IMR-90 (cell line): ENCODE measurements at regions of chr1 and their contacts with region 1.

Region 1: DNA sequence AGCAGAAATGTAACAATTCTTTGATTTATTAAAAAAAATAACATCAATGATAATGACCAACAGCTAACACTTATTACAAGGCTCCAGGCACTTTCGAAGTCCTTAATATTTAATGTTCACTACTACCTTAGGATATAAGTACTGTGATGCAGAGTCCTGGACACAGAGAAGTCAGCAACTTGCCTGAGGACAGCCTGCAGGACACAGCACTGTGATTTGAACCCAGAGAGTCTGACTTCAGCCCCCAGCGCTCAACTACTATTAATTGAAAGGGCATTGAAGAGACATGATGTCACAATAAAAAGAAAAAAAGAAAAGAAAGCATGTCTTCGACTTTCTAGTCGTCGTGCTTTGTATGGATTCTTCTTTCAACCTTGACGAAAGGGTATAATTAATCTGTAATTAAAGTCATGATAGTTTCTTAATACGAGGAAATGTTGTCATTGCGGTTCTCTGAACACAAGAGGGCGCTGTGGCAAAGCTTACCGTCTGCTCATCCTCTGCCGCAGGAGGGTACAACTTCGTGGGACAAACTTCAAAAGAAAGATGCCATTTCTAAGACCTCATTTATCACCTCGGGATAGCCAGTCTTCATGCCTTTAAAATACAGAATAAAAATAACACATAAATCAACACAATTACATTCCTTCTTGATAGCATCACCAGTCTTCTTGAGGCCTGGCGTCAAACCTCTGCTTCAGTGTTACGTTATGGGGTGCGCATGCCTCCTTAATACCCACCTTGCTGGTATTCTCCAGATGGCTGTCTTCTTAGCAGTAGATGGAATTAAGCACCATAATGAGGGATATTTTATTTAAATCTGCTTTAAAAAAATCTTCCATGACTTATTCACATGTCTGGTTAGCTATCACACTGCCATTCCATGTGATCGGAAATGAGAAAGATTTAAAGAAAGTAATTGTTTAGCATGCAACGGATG is 240.1 kb downstream of the DISC1 start:
- DNase-seq: peak; percentile 58
- ATAC-seq: peak; percentile 48; the same call in 1 of the 2 replicates
- H3K4me3 ChIP-seq: no peak overlapping the region
- H3K27ac ChIP-seq: no peak overlapping the region
- H3K4me1 ChIP-seq: peaks cover 6% of the 10 kb centered on the region; the same call in 1 of the 2 replicates
- H3K27me3 ChIP-seq: no peaks in the 10 kb centered on the region
- CTCF ChIP-seq: peak; percentile 84
- POLR2A ChIP-seq: 0 out of 2 replicates have a peak, but pooled peaks have one; percentile 31
- RAD21 ChIP-seq: peak; percentile 94

Region 2: GRCh38 chr1:231757101-231757404 is 109.6 kb before region 1 on chr1:
- CTCF ChIA-PET with region 1: interaction called, 3 read pairs
- POLR2A ChIA-PET with region 1: no interaction called
- dilution Hi-C with region 1: no loop called
- in situ Hi-C with region 1: no loop called
- intact Hi-C with region 1: loop called (anchors 5 kb)
- DNase-seq: no peak
- ATAC-seq: peak; percentile 53
- H3K4me3 ChIP-seq: no peak overlapping the region
- H3K27ac ChIP-seq: no peak overlapping the region
- H3K4me1 ChIP-seq: no peaks in the 10 kb centered on the region
- H3K27me3 ChIP-seq: no peaks in the 10 kb centered on the region
- CTCF ChIP-seq: no peak
- POLR2A ChIP-seq: no peak
- RAD21 ChIP-seq: no peak

Region 3: DNA sequence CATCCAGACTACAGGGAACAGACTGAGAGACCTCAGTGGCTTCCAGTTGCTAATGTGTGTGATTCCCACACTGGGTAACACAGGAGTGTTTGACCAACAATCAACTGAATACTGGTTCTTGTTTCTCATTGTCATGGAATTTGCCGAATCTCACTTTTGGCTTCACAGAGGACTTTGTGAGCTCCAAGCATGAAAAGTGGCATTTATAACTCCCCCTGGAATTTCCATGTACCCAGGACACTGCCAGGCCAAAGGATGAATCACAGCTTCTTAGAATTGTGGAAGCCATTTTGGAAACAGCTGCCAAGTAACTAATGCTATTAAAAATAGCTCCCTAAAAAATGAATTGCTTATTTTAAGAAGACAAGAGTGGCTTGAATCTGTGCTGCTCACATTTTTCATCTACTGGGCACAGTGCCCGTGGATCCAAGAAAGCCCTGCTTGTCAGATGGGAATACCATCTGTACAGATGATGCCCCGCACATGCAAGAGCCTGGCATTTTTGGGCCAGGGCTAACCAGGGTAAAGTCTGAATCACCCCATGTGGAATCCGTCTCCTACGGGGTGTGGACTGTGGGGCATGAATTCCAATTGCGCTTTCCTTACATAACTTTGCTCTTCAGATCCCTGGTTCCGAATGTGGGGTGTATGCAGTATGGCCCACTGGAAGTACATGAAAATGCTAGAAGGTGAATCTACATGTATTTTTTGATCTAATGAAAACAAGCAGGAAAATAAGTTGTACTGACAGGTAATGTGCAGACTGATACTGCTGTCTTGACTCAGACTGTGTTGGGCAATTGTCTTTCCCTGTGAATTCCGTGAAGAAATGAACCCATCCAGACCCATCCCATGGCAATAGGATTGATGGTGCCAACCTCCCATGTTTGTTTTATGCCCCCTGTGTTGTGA is 276.0 kb after region 1 on chr1:
- CTCF ChIA-PET with region 1: no interaction called
- POLR2A ChIA-PET with region 1: no interaction called
- dilution Hi-C with region 1: no loop called
- in situ Hi-C with region 1: no loop called
- intact Hi-C with region 1: loop called (anchors 10 kb)
- DNase-seq: peak; percentile 82
- ATAC-seq: peak; percentile 90
- H3K4me3 ChIP-seq: no peak overlapping the region
- H3K27ac ChIP-seq: no peak overlapping the region
- H3K4me1 ChIP-seq: peaks cover 8% of the 10 kb centered on the region
- H3K27me3 ChIP-seq: no peaks in the 10 kb centered on the region
- CTCF ChIP-seq: no peak
- POLR2A ChIP-seq: no peak
- RAD21 ChIP-seq: no peak

Region 4: GRCh38 chr1:232260844-232261243 is 394.2 kb after region 1 on chr1:
- CTCF ChIA-PET with region 1: no interaction called
- POLR2A ChIA-PET with region 1: no interaction called
- dilution Hi-C with region 1: no loop called
- in situ Hi-C with region 1: no loop called
- intact Hi-C with region 1: no loop called
- DNase-seq: no peak
- ATAC-seq: no peak
- H3K4me3 ChIP-seq: no peak overlapping the region
- H3K27ac ChIP-seq: no peak overlapping the region
- H3K4me1 ChIP-seq: no peaks in the 10 kb centered on the region
- H3K27me3 ChIP-seq: peaks cover 7% of the 10 kb centered on the region
- CTCF ChIP-seq: no peak
- POLR2A ChIP-seq: no peak
- RAD21 ChIP-seq: no peak

Region 5: GRCh38 chr1:232428786-232429530 is 562.3 kb after region 1 on chr1:
- CTCF ChIA-PET with region 1: no interaction called
- POLR2A ChIA-PET with region 1: no interaction called
- dilution Hi-C with region 1: no loop called
- in situ Hi-C with region 1: no loop called
- intact Hi-C with region 1: loop called (anchors 5 kb)
- DNase-seq: peak; percentile 89
- ATAC-seq: peak; percentile 96
- H3K4me3 ChIP-seq: no peak overlapping the region
- H3K27ac ChIP-seq: 0 out of 2 replicates have a peak overlapping the region, but pooled peaks have one; percentile 8
- H3K4me1 ChIP-seq: peaks cover 11% of the 10 kb centered on the region
- H3K27me3 ChIP-seq: no peaks in the 10 kb centered on the region
- CTCF ChIP-seq: no peak
- POLR2A ChIP-seq: no peak
- RAD21 ChIP-seq: no peak

Region 6: GRCh38 chr1:233240829-233241682 is 1374.4 kb after region 1 on chr1:
- CTCF ChIA-PET with region 1: no interaction called
- POLR2A ChIA-PET with region 1: no interaction called
- dilution Hi-C with region 1: no loop called
- in situ Hi-C with region 1: no loop called
- intact Hi-C with region 1: loop called (anchors 5 kb)
- DNase-seq: peak; percentile 42
- ATAC-seq: peak; percentile 71
- H3K4me3 ChIP-seq: no peak overlapping the region
- H3K27ac ChIP-seq: no peak overlapping the region
- H3K4me1 ChIP-seq: peaks cover 4% of the 10 kb centered on the region; the same call in 1 of the 2 replicates
- H3K27me3 ChIP-seq: no peaks in the 10 kb centered on the region
- CTCF ChIP-seq: peak; percentile 76
- POLR2A ChIP-seq: no peak
- RAD21 ChIP-seq: peak; percentile 92